ENCODE measurements at regions of chr11 and their contacts with region 1.

Region 1: GRCh38 chr11:75270896-75271418 is 30.4 kb downstream of the TPBGL start:
- DNase-seq: peak; percentile 31 to 49 (median 44)
- H3K4me3 ChIP-seq: no peak overlapping the region
- H3K27ac ChIP-seq: no peak overlapping the region
- H3K4me1 ChIP-seq: peaks cover 2 to 45% (median 32%) of the 10 kb centered on the region in 4 experiments
- H3K27me3 ChIP-seq: no peaks in the 10 kb centered on the region

Region 2: GRCh38 chr11:75241036-75241905 is 29.7 kb before region 1 on chr11:
- CTCF ChIA-PET with region 1: interaction called, 15 read pairs
- POLR2A ChIA-PET with region 1: interaction called, 5 read pairs
- DNase-seq: peak; percentile 73 to 86 (median 85)
- H3K4me3 ChIP-seq: peak overlapping the region; percentile 13 to 79 (median 62)
- H3K27ac ChIP-seq: no peak overlapping the region
- H3K4me1 ChIP-seq: peaks cover 0 to 21% (median 18%) of the 10 kb centered on the region in 4 experiments
- H3K27me3 ChIP-seq: peaks cover 0 to 75% (median 50%) of the 10 kb centered on the region in 5 experiments

Region 3: GRCh38 chr11:75260411-75261177 is 10.4 kb before region 1 on chr11:
- CTCF ChIA-PET with region 1: interaction called, 10 read pairs
- POLR2A ChIA-PET with region 1: no interaction called
- DNase-seq: no peak
- H3K4me3 ChIP-seq: no peak overlapping the region
- H3K27ac ChIP-seq: no peak overlapping the region
- H3K4me1 ChIP-seq: peaks cover 8 to 46% (median 41%) of the 10 kb centered on the region in 4 experiments
- H3K27me3 ChIP-seq: peaks cover 0 to 4% (median 0%) of the 10 kb centered on the region in 5 experiments

Measured in common myeloid progenitor, CD34-positive (primary cell).